Heart left ventricle (tissue), 16 donors: ENCODE measurements at regions of chr13 and their contacts with region 1.

Region 1: GRCh38 chr13:24574847-24575246 is 62.3 kb upstream of the PARP4 start:
- DNase-seq: no peak
- ATAC-seq: no peak
- H3K4me3 ChIP-seq: no peak overlapping the region
- H3K27ac ChIP-seq: no peak overlapping the region
- H3K4me1 ChIP-seq: no peaks in the 10 kb centered on the region
- H3K27me3 ChIP-seq: no peaks in the 10 kb centered on the region
- CTCF ChIP-seq: no peak
- POLR2A ChIP-seq: no peak

Region 2: GRCh38 chr13:24664726-24665409 is 90.0 kb after region 1 on chr13:
- intact Hi-C with region 1: loop called in 5 of 10 experiments (anchors 5 to 10 kb)
- DNase-seq: no peak
- ATAC-seq: no peak
- H3K4me3 ChIP-seq: no peak overlapping the region
- H3K27ac ChIP-seq: no peak overlapping the region
- H3K4me1 ChIP-seq: no peaks in the 10 kb centered on the region
- H3K27me3 ChIP-seq: peaks cover 0 to 6% (median 0%) of the 10 kb centered on the region in 9 donors
- CTCF ChIP-seq: no peak
- POLR2A ChIP-seq: no peak

Region 3: DNA sequence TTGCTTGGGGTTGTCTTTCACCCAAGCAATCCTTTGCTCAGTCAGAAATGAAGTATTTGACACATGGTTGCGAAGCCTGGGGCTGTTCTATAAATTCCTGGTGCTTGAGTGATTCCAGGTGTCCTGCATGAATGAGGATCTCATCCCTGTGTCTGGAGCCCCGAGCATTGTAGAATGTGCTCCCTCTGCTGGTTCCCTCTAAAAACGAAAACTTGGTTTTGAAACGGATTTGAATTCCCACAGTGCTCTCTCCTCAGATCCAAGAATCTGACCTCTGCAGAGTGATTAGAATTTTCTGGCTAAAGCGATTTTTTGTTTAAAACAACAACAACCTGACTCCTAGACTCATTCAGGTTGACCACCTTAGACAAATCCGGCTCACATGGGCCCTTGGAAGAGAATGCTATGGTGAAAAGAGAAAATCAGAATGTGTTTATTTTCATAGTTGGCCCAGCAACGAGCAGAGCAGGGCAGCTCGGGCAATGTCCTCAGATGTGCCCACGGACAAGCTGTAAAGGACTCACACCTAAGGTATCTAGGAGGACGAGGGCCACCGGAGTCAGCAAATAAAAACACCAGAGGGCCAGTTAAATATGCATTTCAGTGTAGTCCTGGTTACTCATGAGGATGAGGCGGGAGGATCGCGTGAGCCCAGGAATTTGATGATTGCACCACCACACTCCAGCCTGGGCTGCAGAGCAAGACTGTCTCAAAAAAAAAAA is 96.7 kb after region 1 on chr13:
- intact Hi-C with region 1: loop called in 5 of 10 experiments (anchors 5 to 10 kb)
- DNase-seq: no peak
- ATAC-seq: peak; percentile 49 to 79 (median 66)
- H3K4me3 ChIP-seq: peak overlapping the region in 5 of 12 donors; percentile 8 to 30 (median 23)
- H3K27ac ChIP-seq: peak overlapping the region in 1 of 12 donors; percentile 44
- H3K4me1 ChIP-seq: peaks cover 0 to 11% (median 0%) of the 10 kb centered on the region in 12 donors
- H3K27me3 ChIP-seq: peaks cover 0 to 18% (median 0%) of the 10 kb centered on the region in 9 donors
- CTCF ChIP-seq: peak; percentile 29 to 70 (median 54)
- POLR2A ChIP-seq: no peak

Region 4: GRCh38 chr13:25067054-25067453 is 492.2 kb after region 1 on chr13:
- intact Hi-C with region 1: no loop called
- DNase-seq: no peak
- ATAC-seq: no peak
- H3K4me3 ChIP-seq: no peak overlapping the region
- H3K27ac ChIP-seq: no peak overlapping the region
- H3K4me1 ChIP-seq: no peaks in the 10 kb centered on the region
- H3K27me3 ChIP-seq: peaks cover 0 to 30% (median 0%) of the 10 kb centered on the region in 9 donors
- CTCF ChIP-seq: no peak
- POLR2A ChIP-seq: no peak